ENCODE measurements at regions of chr16 and their contacts with region 1.

Region 1: GRCh38 chr16:11407047-11407982 is 62.1 kb downstream of the RMI2 start:
- DNase-seq: peak; percentile 86
- H3K4me3 Mint-ChIP-seq: no peak overlapping the region
- H3K27ac Mint-ChIP-seq: no peak overlapping the region
- H3K4me1 Mint-ChIP-seq: peaks cover 2% of the 10 kb centered on the region
- H3K27me3 Mint-ChIP-seq: no peaks in the 10 kb centered on the region

Region 2: DNA sequence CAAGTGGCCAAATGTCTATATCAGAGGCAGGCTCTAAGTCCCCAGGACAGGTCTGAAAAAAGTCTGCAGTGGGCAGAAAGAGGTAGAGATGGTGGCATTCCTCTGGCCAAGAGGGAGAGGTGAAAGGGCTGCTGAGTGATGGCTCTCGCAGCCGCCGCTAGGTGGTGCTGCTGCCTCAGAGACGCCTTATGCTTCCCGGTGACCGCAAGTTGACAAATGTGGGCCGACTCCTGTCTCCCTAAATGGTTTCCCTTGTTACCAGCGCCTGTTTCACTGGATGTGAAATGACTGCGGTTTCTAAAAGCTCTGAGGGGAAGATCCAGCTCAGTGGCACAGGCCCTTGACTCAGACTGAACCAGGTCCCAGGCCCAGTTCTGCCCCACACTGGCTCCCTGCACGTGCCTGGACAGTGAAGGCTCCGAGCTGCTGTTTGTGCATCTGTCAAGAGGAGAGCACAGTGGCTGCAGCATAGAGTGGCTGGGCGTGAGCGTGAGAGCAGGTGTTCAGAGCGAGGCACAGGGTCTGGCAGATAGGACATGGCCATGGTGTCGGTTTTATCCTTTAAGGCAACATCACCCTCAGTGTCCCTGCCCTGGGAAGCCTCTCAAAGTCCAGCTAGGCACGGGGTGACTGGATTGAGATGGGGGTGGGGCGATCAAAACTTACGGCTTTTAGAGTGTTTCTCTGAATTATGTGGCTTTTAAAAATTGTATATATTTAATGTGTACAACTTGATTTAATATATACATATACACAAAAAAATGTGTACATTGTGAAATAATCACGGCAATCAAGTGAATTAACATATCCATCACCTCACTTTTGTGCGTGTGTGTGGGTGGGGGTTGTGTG is 443.1 kb before region 1 on chr16:
- CTCF ChIA-PET with region 1: interaction called, 37 read pairs
- intact Hi-C with region 1: loop called (anchors 1 kb)
- DNase-seq: peak; percentile 92
- H3K4me3 Mint-ChIP-seq: peak overlapping the region; percentile 43
- H3K27ac Mint-ChIP-seq: peak overlapping the region; percentile 92
- H3K4me1 Mint-ChIP-seq: peaks cover 39% of the 10 kb centered on the region
- H3K27me3 Mint-ChIP-seq: no peaks in the 10 kb centered on the region

Region 3: DNA sequence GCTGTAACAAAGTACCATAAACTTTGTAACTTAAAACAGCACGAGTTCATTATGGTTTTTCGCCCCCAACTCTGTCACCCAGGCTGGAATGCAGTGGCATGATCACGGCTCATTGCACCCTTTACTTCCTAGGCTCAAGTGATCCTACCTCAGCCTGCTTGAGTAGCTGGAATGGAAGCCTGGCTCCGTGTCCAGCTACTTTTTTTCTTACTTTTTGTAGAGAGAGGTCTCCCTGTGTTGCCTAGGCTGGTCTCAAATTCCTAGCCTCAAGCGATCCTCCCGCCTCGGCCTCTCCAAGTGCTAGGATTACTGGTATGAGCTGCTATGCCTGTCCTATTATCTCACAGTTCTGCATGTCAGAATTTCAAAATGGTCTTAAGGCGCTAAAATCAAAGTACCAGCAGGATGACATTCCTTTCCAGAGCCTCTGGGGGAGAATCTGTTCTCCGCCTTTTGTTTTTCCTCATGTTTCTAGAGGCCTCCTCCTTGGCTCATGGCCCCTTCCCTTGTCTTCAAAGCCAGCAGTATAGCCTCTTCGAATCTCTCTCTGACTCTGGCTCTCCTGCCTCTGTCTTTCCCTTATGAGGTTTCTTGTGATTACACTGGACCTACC is 116.1 kb before region 1 on chr16:
- CTCF ChIA-PET with region 1: no interaction called
- intact Hi-C with region 1: no loop called
- DNase-seq: no peak
- H3K4me3 Mint-ChIP-seq: no peak overlapping the region
- H3K27ac Mint-ChIP-seq: no peak overlapping the region
- H3K4me1 Mint-ChIP-seq: peaks cover 14% of the 10 kb centered on the region
- H3K27me3 Mint-ChIP-seq: no peaks in the 10 kb centered on the region

Region 4: GRCh38 chr16:11425140-11425539 is 17.8 kb after region 1 on chr16:
- CTCF ChIA-PET with region 1: interaction called, 14 read pairs
- intact Hi-C with region 1: no loop called
- DNase-seq: no peak
- H3K4me3 Mint-ChIP-seq: no peak overlapping the region
- H3K27ac Mint-ChIP-seq: peak overlapping the region; percentile 36
- H3K4me1 Mint-ChIP-seq: no peaks in the 10 kb centered on the region
- H3K27me3 Mint-ChIP-seq: no peaks in the 10 kb centered on the region

Region 5: DNA sequence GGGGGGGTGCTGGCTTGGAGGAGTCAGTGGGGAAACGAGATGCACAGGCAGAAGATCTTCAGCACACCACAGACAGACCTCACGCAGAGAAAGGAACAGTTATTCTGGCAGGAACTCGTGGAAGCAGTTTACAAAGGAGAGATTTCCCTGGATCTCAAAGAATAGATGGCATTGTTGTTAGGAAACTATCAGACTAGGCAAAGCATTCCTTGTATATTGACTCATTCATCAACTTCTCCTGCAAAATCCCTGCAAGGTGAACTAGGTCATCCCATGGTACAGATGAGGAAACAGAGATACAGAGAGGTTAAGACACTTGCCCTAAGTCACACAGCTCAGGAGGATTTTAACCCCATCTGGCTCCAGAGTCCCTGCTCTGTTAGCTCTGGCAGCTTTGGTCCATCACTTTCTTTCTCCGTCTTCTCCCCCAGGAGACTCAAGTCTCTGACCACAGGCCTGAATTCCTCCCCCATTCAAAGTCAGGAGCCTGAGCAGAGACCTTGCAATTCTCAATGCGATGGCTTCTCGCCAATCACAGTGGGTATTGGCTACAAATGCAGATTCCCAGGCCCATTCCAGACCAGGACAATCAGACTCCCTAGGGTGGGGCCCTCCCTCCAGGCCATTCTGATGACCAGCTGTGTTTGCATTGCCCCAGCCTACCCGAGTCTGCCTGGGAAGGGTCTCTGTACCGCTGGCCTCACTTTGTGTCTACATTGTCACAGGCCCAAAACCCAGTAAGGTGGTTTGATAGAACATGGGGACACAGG is 123.0 kb after region 1 on chr16:
- CTCF ChIA-PET with region 1: interaction called, 26 read pairs
- intact Hi-C with region 1: loop called (anchors 1 kb)
- DNase-seq: no peak
- H3K4me3 Mint-ChIP-seq: no peak overlapping the region
- H3K27ac Mint-ChIP-seq: no peak overlapping the region
- H3K4me1 Mint-ChIP-seq: peaks cover 5% of the 10 kb centered on the region
- H3K27me3 Mint-ChIP-seq: no peaks in the 10 kb centered on the region

Region 6: DNA sequence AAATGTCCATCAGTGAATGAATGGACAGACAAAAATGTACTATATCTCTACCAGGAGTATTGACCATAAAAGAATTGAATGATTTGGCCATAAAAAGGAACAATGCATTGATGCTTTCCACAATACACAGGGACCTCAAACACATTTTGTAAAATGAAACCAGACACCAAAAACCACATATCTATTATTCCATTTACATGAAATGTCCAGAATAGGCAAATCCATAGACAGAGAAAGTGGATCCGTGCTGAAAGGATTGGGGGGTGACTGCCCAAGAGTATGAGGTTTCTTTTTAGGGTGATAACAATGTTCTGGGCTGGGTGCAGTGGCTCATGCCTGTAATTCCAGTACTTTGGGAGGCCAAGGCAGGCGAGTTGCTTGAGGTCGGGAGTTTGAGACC is 186.3 kb after region 1 on chr16:
- CTCF ChIA-PET with region 1: no interaction called
- intact Hi-C with region 1: no loop called
- DNase-seq: no peak
- H3K4me3 Mint-ChIP-seq: no peak overlapping the region
- H3K27ac Mint-ChIP-seq: no peak overlapping the region
- H3K4me1 Mint-ChIP-seq: peaks cover 19% of the 10 kb centered on the region
- H3K27me3 Mint-ChIP-seq: no peaks in the 10 kb centered on the region

Region 7: GRCh38 chr16:11639925-11640899 is 232.9 kb after region 1 on chr16:
- CTCF ChIA-PET with region 1: interaction called, 11 read pairs
- intact Hi-C with region 1: loop called (anchors 1 kb)
- DNase-seq: no peak
- H3K4me3 Mint-ChIP-seq: no peak overlapping the region
- H3K27ac Mint-ChIP-seq: no peak overlapping the region
- H3K4me1 Mint-ChIP-seq: peaks cover 11% of the 10 kb centered on the region
- H3K27me3 Mint-ChIP-seq: no peaks in the 10 kb centered on the region

Region 8: GRCh38 chr16:11816103-11816502 is 408.8 kb after region 1 on chr16:
- CTCF ChIA-PET with region 1: interaction called, 3 read pairs
- intact Hi-C with region 1: loop called (anchors 2 kb)
- DNase-seq: no peak
- H3K4me3 Mint-ChIP-seq: no peak overlapping the region
- H3K27ac Mint-ChIP-seq: no peak overlapping the region
- H3K4me1 Mint-ChIP-seq: peaks cover 5% of the 10 kb centered on the region
- H3K27me3 Mint-ChIP-seq: no peaks in the 10 kb centered on the region

Measured in activated naive CD4-positive, alpha-beta T cell treated with anti-CD3 and anti-CD28 coated beads for 36 hours (primary cell).